ENCODE measurements at regions of chr2 and their contacts with region 1.

Region 1: DNA sequence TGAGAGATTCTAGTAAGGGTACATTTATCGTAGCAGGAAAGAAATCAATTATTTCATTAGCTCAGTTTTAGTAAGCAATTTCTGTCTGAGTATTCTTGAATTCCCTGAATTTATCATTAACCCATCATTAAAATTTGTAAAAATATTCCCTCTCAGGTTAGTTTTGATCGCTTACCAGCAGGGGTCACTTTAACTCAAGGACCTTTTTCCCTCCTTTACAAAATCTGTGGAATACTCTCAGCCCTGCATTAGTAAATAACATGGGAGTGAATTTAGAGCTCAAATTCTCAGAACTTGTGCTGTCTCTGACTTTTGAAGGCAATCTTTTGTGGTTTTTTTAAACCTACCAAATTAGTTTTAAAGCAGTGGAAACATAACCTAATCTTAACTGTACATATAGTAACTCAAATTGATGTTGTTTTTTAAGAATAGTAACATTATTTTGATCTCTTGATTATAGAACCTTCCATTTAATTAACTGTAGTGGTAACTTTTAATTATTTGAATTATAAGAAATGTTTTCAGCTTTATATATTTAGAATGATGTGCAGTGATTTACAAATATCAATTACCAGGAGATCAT is 97.2 kb downstream of the AGPS start:
- DNase-seq: no peak
- H3K4me3 ChIP-seq: no peak overlapping the region
- H3K27ac ChIP-seq: no peak overlapping the region
- H3K4me1 ChIP-seq: no peaks in the 10 kb centered on the region
- H3K27me3 ChIP-seq: no peaks in the 10 kb centered on the region
- CTCF ChIP-seq: peak; percentile 48 to 61

Region 2: DNA sequence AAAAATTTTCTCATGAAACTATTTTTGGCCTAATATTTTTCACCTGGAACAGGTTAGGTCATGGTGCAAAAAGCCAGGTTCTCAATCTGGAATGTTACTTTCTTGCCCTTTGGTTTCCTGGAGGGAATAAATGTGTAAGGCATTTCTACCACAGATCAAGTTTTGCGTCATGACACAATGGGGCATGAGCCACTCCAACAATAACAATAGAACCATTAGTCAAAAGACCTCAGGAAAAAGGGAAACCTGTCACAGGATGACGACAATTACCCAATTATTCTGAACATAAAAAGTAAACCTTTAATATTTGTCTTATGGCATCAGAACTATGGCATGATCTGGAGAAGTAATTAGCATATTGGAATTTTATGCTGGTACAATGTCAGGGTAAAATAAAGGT is 365.4 kb before region 1 on chr2:
- CTCF ChIA-PET with region 1: no interaction called
- dilution Hi-C with region 1: no loop called
- in situ Hi-C with region 1: no loop called
- intact Hi-C with region 1: no loop called
- DNase-seq: peak; percentile 32
- H3K4me3 ChIP-seq: no peak overlapping the region
- H3K27ac ChIP-seq: no peak overlapping the region
- H3K4me1 ChIP-seq: no peaks in the 10 kb centered on the region
- H3K27me3 ChIP-seq: no peaks in the 10 kb centered on the region
- CTCF ChIP-seq: no peak

Region 3: DNA sequence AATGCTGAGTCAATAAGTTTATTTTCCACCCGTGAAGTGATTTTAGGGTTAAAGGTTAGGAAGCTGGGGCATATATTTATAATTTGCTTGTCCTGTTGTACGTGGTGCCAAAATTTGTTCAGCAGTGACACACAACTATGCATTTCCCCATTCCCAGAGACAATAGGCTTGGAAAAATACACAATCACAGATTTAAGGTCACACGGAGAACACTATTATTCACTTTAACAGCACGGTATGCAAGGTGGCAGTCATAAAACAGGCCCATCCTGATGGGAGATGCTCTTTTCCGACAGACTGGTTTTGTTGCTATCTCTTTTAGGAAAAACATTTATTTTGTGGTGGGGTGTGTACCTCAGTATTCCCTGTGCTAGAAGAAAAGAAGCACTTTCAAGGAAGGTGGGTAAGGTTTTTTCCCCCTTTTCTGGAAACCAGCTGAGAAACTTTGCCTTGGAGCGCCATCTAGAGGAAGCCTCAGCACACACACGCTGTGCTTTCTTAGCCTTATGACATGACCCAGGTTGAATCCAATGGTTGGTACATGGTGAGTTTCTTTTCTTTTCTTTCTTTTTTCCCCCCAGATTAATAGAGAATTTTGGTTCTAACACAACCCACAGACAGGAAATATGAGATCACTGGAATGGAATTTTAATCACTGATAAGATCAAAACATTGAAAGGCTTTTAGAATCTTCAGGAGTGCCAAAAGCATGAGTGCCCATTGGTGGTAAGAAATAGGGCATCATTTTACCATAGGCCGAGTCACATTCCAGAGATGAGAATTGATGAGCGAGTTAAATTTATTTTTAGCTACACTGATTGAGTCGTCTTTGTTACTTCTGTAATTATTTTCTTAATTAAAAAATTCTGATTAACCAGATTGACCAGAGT is 234.8 kb after region 1 on chr2:
- CTCF ChIA-PET with region 1: no interaction called
- dilution Hi-C with region 1: no loop called
- in situ Hi-C with region 1: loop called in 1 of 2 experiments (anchors 25 kb)
- intact Hi-C with region 1: loop called (anchors 2 kb)
- DNase-seq: peak; percentile 15
- H3K4me3 ChIP-seq: no peak overlapping the region
- H3K27ac ChIP-seq: no peak overlapping the region
- H3K4me1 ChIP-seq: no peaks in the 10 kb centered on the region
- H3K27me3 ChIP-seq: peaks cover 2% of the 10 kb centered on the region
- CTCF ChIP-seq: peak; percentile 91 to 95

Measured in mammary epithelial cell (primary cell).